GM10248 (cell line): ENCODE measurements at regions of chr5 and their contacts with region 1.

Region 1: GRCh38 chr5:36690041-36690961 is 83.9 kb downstream of the SLC1A3 start:
- DNase-seq: peak; percentile 86
- CTCF ChIP-seq: peak; percentile 83

Region 2: GRCh38 chr5:36414869-36415282 is 275.4 kb before region 1 on chr5:
- CTCF ChIA-PET with region 1: interaction called, 17 read pairs
- POLR2A ChIA-PET with region 1: no interaction called
- DNase-seq: no peak
- CTCF ChIP-seq: peak; percentile 16

Region 3: GRCh38 chr5:36982146-36982545 is 291.8 kb after region 1 on chr5:
- CTCF ChIA-PET with region 1: no interaction called
- POLR2A ChIA-PET with region 1: no interaction called
- DNase-seq: no peak
- CTCF ChIP-seq: no peak